Left cardiac atrium (tissue), 4 donors: ENCODE measurements at regions of chr3 and their contacts with region 1.

Region 1: GRCh38 chr3:108477511-108478147 is 32.8 kb downstream of the MYH15 start:
- DNase-seq: peak; percentile 56
- ATAC-seq: peak; percentile 50 to 53

Region 2: GRCh38 chr3:107927361-107928083 is 550.1 kb before region 1 on chr3:
- intact Hi-C with region 1: loop called in 1 of 2 experiments (anchors 10 kb)
- DNase-seq: peak; percentile 76
- ATAC-seq: peak; percentile 98

Region 3: DNA sequence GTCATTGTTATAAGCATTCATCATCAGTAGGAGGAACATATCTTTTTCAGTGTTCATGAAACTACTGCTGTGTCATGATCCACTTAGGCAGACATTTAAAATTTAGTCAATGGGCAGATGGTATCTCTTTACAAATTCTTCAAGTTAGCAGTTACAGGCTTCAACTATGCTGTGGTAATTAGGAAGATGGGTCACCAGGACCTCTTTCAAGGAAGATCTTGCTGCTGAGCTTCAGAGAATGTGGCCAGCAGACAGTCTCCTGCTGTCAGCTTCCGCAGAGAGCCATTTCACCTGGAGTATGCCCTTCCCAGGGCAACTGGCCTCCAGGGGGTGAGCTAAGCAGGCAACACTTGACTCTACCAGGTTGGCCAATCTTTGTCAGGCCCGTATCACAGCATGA is 274.8 kb before region 1 on chr3:
- intact Hi-C with region 1: no loop called
- DNase-seq: no peak
- ATAC-seq: no peak

Region 4: GRCh38 chr3:108578064-108578463 is 100.4 kb after region 1 on chr3:
- intact Hi-C with region 1: no loop called
- DNase-seq: no peak
- ATAC-seq: no peak

Region 5: GRCh38 chr3:108835101-108835500 is 357.5 kb after region 1 on chr3:
- intact Hi-C with region 1: no loop called
- DNase-seq: no peak
- ATAC-seq: no peak